ENCODE measurements at regions of chr4 and their contacts with region 1.

Region 1: GRCh38 chr4:48602222-48602621 is 112.2 kb downstream of the ZAR1 start:
- DNase-seq: no peak
- ATAC-seq: no peak

Region 2: GRCh38 chr4:48340965-48341775 is 261.1 kb before region 1 on chr4 and contains the start of gene SLAIN2:
- intact Hi-C with region 1: no loop called
- DNase-seq: peak; percentile 100
- ATAC-seq: peak; percentile 99
- total RNA-seq, gene SLAIN2: 116 TPM

Region 3: DNA sequence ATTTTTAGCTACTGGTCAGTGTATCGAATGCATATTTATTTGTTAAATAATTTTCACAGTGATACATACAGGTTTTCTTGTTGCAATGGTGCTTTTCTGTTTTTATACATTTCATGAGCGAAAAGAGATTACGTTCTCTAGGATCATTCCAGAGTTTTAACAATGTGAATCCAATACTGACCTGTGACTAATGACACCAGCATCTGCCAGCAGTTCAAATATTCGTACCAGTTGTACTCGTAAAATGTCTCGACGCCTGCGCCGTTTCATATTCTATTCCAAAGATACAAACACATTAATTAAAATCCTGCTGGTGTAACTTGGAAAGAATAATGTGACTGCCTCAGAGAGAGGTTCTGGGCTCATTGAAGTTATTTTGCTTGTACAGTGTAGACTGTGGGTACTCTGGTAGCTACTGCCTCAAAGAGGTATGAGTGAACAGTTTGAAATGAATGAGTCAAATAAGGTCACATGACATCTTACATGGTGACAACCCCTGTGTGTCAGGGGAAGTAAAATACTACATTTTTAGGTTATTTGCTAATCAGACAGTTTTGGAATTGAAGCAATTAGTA is 31.5 kb before region 1 on chr4:
- intact Hi-C with region 1: no loop called
- DNase-seq: no peak
- ATAC-seq: no peak

Region 4: DNA sequence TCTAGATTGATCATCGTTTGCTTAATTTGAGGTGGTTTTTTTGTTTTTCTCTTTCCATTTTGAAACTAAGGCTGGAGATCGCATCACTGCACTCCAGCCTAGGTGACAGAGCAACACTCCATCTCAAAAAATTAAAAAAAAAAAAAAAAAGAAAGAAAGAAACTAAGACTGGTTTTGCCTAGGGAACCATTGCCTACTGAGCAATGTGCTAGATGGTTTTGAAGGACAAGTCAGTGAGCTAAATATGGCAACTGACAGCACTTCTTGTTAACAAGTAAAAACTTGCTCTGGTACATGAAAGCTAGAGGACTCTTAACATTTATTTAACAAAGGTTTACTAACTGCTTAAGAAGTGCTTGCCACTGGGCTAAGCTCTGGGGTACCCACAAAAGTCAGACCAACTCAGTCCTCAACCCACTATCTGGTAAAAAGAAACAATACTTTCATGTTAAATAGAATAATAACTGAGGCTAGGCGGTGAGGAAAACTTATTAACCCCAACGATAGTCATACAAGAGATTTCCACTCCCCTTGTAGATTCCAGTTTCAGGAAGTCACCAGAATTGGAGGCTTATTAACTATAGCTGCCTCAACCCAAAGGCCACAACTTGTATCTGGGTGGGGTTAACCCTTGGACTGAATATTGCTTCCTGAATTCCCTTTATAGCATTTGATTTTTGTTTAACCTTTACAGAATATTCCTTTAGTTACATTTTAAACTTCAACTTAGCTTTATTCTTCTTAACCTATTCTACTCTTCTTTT is 66.2 kb after region 1 on chr4:
- intact Hi-C with region 1: loop called (anchors 5 kb)
- DNase-seq: no peak
- ATAC-seq: peak; percentile 37

Region 5: DNA sequence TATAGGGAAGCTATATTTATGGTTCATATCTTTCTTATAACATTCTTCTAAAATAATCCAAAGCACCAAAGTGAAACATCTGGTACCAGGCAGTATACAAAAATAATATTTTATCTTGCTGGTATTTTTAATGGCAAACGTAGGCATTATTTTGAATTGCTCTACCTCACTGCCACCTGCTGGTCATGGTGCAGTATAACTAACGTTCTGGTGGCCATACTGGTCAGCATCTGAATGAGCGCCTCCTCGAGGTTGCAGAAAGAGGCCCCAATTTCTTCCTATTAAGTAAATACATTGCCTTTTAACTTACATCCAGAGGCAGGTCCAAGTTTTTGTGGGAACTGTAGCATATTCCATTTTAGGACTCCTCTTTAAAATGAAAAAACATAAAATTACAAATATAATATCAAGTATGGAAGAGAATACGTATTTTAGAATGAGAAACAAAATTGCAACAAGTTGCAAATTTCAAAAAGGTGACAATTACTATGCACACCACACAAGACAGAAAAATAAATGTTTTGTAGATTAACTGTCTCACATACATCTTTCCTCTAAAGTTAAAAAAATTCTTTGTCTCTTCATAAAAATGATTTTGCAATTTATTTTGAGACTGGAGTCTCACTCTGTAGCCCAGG is 360.9 kb after region 1 on chr4:
- intact Hi-C with region 1: no loop called
- DNase-seq: no peak
- ATAC-seq: peak; percentile 76

Region 6: GRCh38 chr4:48985976-48986653 is 383.9 kb after region 1 on chr4 and contains the start of gene CWH43:
- intact Hi-C with region 1: no loop called
- DNase-seq: no peak
- ATAC-seq: no peak
- total RNA-seq, gene CWH43: not detected

Measured in Right ventricle myocardium inferior (tissue), 1 donor.